Activated naive CD4-positive, alpha-beta T cell treated with anti-CD3 and anti-CD28 coated beads for 36 hours (primary cell): ENCODE measurements at regions of chr6 and their contacts with region 1.

Region 1: DNA sequence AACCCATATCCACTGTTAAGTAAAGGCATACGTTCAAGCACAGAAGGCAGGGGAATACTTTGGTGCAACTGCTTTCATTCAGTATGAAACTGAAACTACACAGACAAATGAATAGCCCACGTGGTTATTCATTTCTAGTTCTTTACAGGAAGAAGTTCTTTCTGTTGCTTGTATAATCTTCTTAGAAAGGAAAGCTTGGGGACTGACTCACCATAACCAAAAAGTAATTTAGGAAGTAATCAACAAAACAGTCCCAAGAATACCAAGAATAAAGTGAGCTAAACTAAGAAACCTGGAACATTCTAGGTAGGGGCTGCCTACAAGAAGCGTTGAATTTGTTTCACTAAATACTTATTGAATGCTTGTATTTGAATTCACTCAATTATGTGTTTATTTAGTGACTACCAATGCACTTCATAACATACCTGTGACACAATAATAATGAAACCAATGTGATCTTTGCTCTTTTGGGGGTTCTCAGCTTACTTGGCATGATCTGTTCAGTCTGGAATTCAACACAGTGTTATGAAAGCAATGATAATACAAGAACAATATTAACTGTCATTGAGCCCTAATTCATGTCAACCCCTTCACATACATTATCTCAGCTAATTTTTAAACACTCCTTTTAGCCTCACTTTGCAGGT is 25.1 kb upstream of the KIAA0408 start:
- DNase-seq: peak; percentile 11
- H3K4me3 Mint-ChIP-seq: no peak overlapping the region
- H3K27ac Mint-ChIP-seq: no peak overlapping the region
- H3K4me1 Mint-ChIP-seq: peaks cover 28% of the 10 kb centered on the region
- H3K27me3 Mint-ChIP-seq: peaks cover 4% of the 10 kb centered on the region

Region 2: GRCh38 chr6:125804264-125804663 is 1680.1 kb before region 1 on chr6:
- CTCF ChIA-PET with region 1: no interaction called
- intact Hi-C with region 1: loop called (anchors 10 kb)
- DNase-seq: peak; percentile 67
- H3K4me3 Mint-ChIP-seq: no peak overlapping the region
- H3K27ac Mint-ChIP-seq: no peak overlapping the region
- H3K4me1 Mint-ChIP-seq: peaks cover 63% of the 10 kb centered on the region
- H3K27me3 Mint-ChIP-seq: no peaks in the 10 kb centered on the region

Region 3: DNA sequence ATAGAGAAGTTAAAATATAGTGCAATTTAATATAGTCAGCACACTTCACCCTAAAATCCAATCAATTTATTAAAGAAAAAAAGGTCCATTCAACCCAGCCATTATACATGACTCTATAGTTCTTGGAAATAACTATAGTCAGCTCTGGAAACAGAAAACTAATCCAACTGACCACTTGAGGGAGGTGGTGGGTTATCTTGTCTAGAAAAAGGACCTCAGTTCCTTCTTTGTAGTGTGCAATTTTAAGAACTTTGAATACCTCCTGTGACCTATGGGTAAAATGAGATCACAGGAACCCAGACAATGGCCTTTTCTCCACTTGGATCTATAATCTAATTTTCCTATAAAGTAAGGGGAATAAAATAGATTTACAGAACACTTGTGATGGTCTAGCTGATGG is 1308.1 kb before region 1 on chr6:
- CTCF ChIA-PET with region 1: no interaction called
- intact Hi-C with region 1: loop called (anchors 1 kb)
- DNase-seq: no peak
- H3K4me3 Mint-ChIP-seq: no peak overlapping the region
- H3K27ac Mint-ChIP-seq: no peak overlapping the region
- H3K4me1 Mint-ChIP-seq: peaks cover 2% of the 10 kb centered on the region
- H3K27me3 Mint-ChIP-seq: no peaks in the 10 kb centered on the region

Region 4: DNA sequence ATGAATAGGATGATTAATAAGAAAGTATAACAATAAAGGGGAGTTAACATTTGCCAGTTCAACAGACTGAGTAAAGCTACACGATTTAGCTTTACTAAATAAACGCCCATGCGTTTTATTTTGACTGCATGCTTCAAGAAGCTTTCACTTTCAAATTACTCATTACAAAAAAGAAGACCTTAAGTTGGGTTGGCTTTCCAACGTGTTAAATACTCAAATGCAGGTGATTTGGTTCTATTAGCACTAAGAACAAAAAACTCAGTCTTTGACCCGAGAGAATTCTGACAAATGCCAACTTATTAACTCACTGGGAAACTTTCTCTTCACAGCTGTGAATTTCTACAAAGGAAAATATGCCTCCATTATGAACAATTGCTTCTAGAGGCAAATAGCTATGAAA is 192.8 kb before region 1 on chr6:
- CTCF ChIA-PET with region 1: interaction called, 4 read pairs
- intact Hi-C with region 1: loop called (anchors 1 kb)
- DNase-seq: no peak
- H3K4me3 Mint-ChIP-seq: no peak overlapping the region
- H3K27ac Mint-ChIP-seq: no peak overlapping the region
- H3K4me1 Mint-ChIP-seq: peaks cover 47% of the 10 kb centered on the region
- H3K27me3 Mint-ChIP-seq: no peaks in the 10 kb centered on the region

Region 5: DNA sequence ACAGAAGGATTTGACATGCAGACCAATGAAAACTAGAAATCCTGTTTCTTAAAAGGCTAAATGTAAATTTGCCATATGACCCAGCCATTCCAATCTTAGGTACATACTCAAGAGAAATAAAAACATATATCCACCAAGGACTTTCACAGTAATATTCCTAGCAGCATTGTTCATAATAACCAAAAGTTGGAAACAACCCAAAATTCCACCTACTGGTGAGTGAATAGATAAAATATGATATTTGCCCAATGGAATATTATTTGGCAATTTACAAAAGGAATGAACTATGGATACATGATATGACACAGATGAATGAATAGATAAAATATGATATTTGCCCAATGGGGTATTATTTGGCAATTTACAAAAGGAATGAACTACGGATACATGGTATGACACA is 12.1 kb after region 1 on chr6:
- CTCF ChIA-PET with region 1: no interaction called
- intact Hi-C with region 1: no loop called
- DNase-seq: no peak
- H3K4me3 Mint-ChIP-seq: no peak overlapping the region
- H3K27ac Mint-ChIP-seq: no peak overlapping the region
- H3K4me1 Mint-ChIP-seq: no peaks in the 10 kb centered on the region
- H3K27me3 Mint-ChIP-seq: no peaks in the 10 kb centered on the region

Region 6: DNA sequence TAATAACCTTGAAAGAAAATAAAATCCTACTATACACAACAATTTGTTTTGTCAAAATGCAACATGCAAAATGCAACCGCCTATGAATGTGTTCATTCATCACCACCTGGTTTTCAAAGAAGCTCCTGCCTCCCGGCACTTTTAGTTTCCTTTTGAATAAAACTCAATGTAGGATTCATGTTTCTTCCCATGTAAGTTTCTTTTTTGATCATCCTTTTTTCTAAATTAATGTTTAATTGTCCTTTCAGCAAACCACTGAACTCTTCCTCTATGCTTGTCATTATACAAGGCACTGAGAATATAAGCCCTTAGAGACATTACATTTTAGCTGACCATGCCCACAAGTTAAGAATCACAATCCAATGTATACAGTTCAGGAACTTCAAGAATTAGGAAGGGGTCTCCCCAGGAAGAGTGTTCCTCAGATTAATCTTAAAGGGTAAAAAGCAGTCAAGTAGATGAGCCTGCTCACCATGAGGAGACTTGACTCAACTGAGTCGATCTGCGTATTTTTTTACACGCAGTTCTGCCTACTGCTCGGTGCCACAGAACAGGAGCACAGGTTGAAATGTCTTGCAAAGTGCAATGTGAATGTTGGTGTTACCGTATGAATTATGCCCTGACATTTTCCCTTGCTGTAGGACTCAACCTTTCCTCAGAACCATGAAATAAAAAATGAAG is 423.8 kb after region 1 on chr6:
- CTCF ChIA-PET with region 1: no interaction called
- intact Hi-C with region 1: loop called (anchors 10 kb)
- DNase-seq: peak; percentile 60
- H3K4me3 Mint-ChIP-seq: peak overlapping the region; percentile 51
- H3K27ac Mint-ChIP-seq: peak overlapping the region; percentile 77
- H3K4me1 Mint-ChIP-seq: peaks cover 42% of the 10 kb centered on the region
- H3K27me3 Mint-ChIP-seq: no peaks in the 10 kb centered on the region

Region 7: GRCh38 chr6:129448965-129449364 is 1964.6 kb after region 1 on chr6:
- CTCF ChIA-PET with region 1: no interaction called
- intact Hi-C with region 1: loop called (anchors 2 kb)
- DNase-seq: no peak
- H3K4me3 Mint-ChIP-seq: no peak overlapping the region
- H3K27ac Mint-ChIP-seq: peak overlapping the region; percentile 37
- H3K4me1 Mint-ChIP-seq: peaks cover 80% of the 10 kb centered on the region
- H3K27me3 Mint-ChIP-seq: no peaks in the 10 kb centered on the region